CD4-positive, alpha-beta memory T cell (primary cell): ENCODE measurements at regions of chr22 and their contacts with region 1.

Region 1: GRCh38 chr22:36239401-36240171 is at the start of gene APOL2:
- DNase-seq: peak; percentile 75 to 94 (median 85)
- H3K4me3 ChIP-seq: peak within 1 kb of the TSS; percentile 59 to 76
- H3K4me3 Mint-ChIP-seq: peak within 1 kb of the TSS; percentile 96 to 100 (median 99)
- H3K27ac ChIP-seq: peak within 1 kb of the TSS; percentile 81
- H3K27ac Mint-ChIP-seq: peak within 1 kb of the TSS; percentile 86 to 99 (median 97)
- H3K4me1 ChIP-seq: peaks cover 42% of the 10 kb centered on the region
- H3K4me1 Mint-ChIP-seq: peaks cover 39 to 55% (median 47%) of the 10 kb centered on the region in 4 donors
- H3K27me3 ChIP-seq: no peaks in the 10 kb centered on the region
- H3K27me3 Mint-ChIP-seq: no peaks in the 10 kb centered on the region
- total RNA-seq, gene APOL2: 96.4 to 103 TPM

Region 2: DNA sequence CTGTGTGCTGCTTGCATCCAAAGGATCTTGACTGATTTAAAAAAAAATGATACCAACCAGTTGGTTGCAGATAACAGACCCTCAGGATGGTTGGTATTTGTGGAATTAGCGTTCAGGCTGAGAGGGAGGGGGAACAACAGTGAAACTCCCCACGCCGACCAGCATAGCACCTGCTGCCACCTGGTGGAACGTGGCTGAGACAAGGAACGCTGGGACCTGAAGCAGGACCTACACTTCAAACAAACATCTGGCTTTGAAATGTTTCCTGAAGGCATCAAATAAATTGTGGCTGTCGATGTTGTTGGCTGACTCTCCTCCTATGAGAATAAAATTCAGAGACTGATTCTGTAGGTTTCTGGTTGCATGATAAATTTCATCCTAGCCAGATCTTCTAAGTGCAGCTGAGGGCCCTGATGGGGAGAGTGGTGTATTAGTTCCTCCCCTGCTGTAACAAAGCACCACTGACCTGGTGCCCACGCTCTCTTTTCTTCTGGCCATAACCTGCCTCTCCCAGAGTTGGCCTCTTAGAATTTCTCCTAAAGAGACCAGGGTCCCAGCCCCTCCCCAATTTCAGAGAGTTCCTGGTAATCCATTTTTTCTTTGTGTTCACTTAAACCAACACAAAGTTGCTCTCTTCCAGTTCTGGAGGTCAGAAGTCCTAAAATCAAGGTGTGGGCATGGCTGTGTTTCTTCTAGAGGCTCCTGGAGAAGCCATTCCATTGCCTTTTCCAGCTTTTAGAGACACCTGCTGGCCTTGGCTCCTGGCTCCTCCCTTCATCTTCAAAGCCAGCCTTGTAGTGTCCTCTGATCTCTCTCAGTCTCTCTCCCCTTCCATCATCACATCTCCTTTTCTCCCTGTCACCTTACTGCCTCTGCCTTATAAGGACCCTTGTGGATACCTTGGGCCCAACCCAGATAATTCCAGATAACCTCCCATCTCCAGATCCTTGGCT is 17.5 kb before region 1 on chr22:
- CTCF ChIA-PET with region 1: interaction called, 10 read pairs
- POLR2A ChIA-PET with region 1: interaction called, 4 read pairs
- intact Hi-C with region 1: no loop called
- DNase-seq: peak; percentile 26 to 50 (median 37)
- H3K4me3 ChIP-seq: no peak overlapping the region
- H3K4me3 Mint-ChIP-seq: peak overlapping the region in 7 of 8 donors; percentile 54 to 73 (median 66)
- H3K27ac ChIP-seq: no peak overlapping the region
- H3K27ac Mint-ChIP-seq: peak overlapping the region in 3 of 7 donors; percentile 58 to 82 (median 69)
- H3K4me1 ChIP-seq: peaks cover 3% of the 10 kb centered on the region
- H3K4me1 Mint-ChIP-seq: peaks cover 4 to 8% (median 5%) of the 10 kb centered on the region in 4 donors
- H3K27me3 ChIP-seq: no peaks in the 10 kb centered on the region
- H3K27me3 Mint-ChIP-seq: peaks cover 9 to 14% of the 10 kb centered on the region in 2 donors

Region 3: GRCh38 chr22:36258701-36259614 is 19.4 kb after region 1 on chr22:
- CTCF ChIA-PET with region 1: interaction called, 47 read pairs
- POLR2A ChIA-PET with region 1: interaction called, 44 read pairs
- intact Hi-C with region 1: no loop called
- DNase-seq: no peak
- H3K4me3 ChIP-seq: no peak overlapping the region
- H3K4me3 Mint-ChIP-seq: peak overlapping the region in 7 of 8 donors; percentile 50 to 81 (median 77)
- H3K27ac ChIP-seq: peak overlapping the region; percentile 33
- H3K27ac Mint-ChIP-seq: peak overlapping the region; percentile 83 to 96 (median 89)
- H3K4me1 ChIP-seq: peaks cover 42% of the 10 kb centered on the region
- H3K4me1 Mint-ChIP-seq: peaks cover 32 to 56% (median 41%) of the 10 kb centered on the region in 4 donors
- H3K27me3 ChIP-seq: no peaks in the 10 kb centered on the region
- H3K27me3 Mint-ChIP-seq: no peaks in the 10 kb centered on the region

Region 4: GRCh38 chr22:36481393-36482168 is 242.0 kb after region 1 on chr22 and contains the start of gene TXN2:
- CTCF ChIA-PET with region 1: interaction called, 16 read pairs
- POLR2A ChIA-PET with region 1: interaction called, 17 read pairs
- intact Hi-C with region 1: loop called (anchors 5 kb)
- DNase-seq: peak; percentile 97 to 99 (median 97)
- H3K4me3 ChIP-seq: peak within 1 kb of the TSS; percentile 80 to 86
- H3K4me3 Mint-ChIP-seq: peak within 1 kb of the TSS; percentile 90 to 100 (median 98)
- H3K27ac ChIP-seq: peak within 1 kb of the TSS; percentile 80
- H3K27ac Mint-ChIP-seq: peak within 1 kb of the TSS; percentile 93 to 100 (median 99)
- H3K4me1 ChIP-seq: peaks cover 22% of the 10 kb centered on the region
- H3K4me1 Mint-ChIP-seq: peaks cover 12 to 31% (median 17%) of the 10 kb centered on the region in 4 donors
- H3K27me3 ChIP-seq: no peaks in the 10 kb centered on the region
- H3K27me3 Mint-ChIP-seq: peaks cover 0 to 3% of the 10 kb centered on the region in 2 donors
- total RNA-seq, gene TXN2: 33.5 to 34.5 TPM

Region 5: DNA sequence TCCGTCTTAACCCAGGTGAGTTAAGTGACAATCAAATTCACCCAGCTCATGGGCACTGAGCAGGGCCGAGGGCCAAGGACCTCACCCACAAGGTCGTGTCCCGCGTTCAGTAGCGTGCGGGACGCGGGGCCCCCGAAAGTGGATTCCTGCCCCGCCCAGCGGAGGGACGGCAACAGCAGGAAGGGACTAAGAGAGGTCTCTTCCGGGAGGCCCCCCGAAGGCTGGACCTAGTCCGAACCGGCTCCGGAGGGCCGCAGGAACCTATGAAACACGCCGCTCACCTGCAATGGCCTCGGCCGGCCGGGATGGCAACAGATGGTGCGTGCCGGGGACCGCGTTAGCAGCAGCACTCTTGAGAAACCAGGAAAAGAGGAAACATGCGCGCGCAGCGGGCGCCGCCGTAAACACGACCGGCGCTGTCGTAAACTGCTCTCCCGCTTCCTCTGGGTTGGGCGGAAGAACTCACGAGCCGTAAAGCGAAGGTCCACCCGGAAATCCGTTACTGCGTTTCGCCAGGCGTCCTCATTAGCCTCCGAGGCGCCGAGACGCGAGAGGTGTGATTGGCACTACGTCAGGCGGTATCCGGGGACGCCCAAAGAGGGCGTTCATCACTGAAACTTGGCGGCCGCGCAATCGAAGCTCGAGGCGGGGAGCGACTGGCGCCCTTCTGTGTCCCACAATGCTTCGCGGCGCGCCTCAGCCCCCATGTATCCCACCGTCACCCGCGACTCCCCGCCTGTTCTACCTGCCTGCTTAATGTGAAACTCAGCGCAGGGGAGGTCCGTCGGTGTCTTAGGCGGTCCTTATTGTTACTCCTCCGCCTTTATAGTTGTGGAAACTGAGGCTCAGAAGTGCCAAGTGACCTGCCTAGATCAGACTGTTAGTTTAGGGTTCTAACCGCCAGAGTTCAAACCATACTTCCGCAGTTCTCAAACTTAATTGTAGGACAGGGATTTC is 289.5 kb after region 1 on chr22 and contains the start of gene EIF3D:
- CTCF ChIA-PET with region 1: interaction called, 3 read pairs
- POLR2A ChIA-PET with region 1: interaction called, 14 read pairs
- intact Hi-C with region 1: no loop called
- DNase-seq: peak; percentile 98 to 100 (median 99)
- H3K4me3 ChIP-seq: peak within 1 kb of the TSS; percentile 79 to 94
- H3K4me3 Mint-ChIP-seq: peak within 1 kb of the TSS; percentile 89 to 97 (median 95)
- H3K27ac ChIP-seq: peak within 1 kb of the TSS; percentile 87
- H3K27ac Mint-ChIP-seq: peak within 1 kb of the TSS; percentile 95 to 99 (median 99)
- H3K4me1 ChIP-seq: peaks cover 20% of the 10 kb centered on the region
- H3K4me1 Mint-ChIP-seq: peaks cover 11 to 30% (median 16%) of the 10 kb centered on the region in 4 donors
- H3K27me3 ChIP-seq: no peaks in the 10 kb centered on the region
- H3K27me3 Mint-ChIP-seq: peaks cover 1% of the 10 kb centered on the region in 2 donors
- total RNA-seq, gene EIF3D: 222 to 228 TPM

Region 6: DNA sequence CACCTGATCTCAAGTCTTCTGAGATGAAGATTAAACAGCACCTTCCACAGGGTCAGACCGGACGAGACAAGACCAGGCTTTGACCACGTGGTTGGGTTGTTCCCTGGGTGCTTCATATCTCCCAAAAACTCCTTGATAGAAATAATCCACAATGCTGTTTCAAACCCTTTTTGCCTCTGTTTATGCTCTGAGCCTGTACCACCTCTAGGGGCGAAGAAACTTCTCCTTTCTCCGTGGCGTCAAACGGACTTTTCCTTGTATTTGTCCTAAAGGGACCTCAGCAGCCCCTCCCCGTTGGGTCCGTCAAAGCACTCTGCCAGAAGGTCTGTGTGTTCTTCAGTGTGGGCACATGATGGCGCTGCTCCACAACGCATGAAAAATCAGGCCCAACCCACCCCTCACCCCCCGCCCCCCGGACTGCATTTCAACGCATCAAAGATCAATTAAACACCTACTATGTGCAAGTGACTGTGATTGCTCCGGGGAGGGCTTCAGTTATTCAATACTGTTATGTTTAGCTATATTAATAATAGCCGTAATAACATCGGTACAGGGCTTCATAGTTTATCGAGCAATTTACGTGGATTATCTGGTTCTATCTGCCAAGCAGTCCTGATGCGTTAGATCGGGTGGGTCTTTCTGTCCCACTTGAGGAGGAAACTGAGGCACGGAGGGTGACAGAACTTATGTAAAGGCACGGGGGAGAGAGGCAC is 306.7 kb after region 1 on chr22:
- CTCF ChIA-PET with region 1: no interaction called
- POLR2A ChIA-PET with region 1: no interaction called
- intact Hi-C with region 1: no loop called
- DNase-seq: peak in 2 of 5 donors; percentile 12
- H3K4me3 ChIP-seq: no peak overlapping the region
- H3K4me3 Mint-ChIP-seq: no peak overlapping the region
- H3K27ac ChIP-seq: no peak overlapping the region
- H3K27ac Mint-ChIP-seq: no peak overlapping the region
- H3K4me1 ChIP-seq: peaks cover 6% of the 10 kb centered on the region
- H3K4me1 Mint-ChIP-seq: peaks cover 1 to 7% (median 7%) of the 10 kb centered on the region in 4 donors
- H3K27me3 ChIP-seq: no peaks in the 10 kb centered on the region
- H3K27me3 Mint-ChIP-seq: peaks cover 12 to 18% of the 10 kb centered on the region in 2 donors